Activated B cell treated with CpG ODN at 0.5 μM for 24 hours (primary cell): ENCODE measurements at regions of chr2 and their contacts with region 1.

Region 1: GRCh38 chr2:186503848-186504606 is 18.0 kb downstream of the ZC3H15 start:
- DNase-seq: no peak
- ATAC-seq: peak; percentile 42
- H3K4me3 Mint-ChIP-seq: no peak overlapping the region
- H3K27ac Mint-ChIP-seq: no peak overlapping the region
- H3K4me1 Mint-ChIP-seq: peaks cover 2% of the 10 kb centered on the region
- H3K27me3 Mint-ChIP-seq: no peaks in the 10 kb centered on the region
- CTCF ChIP-seq: no peak

Region 2: DNA sequence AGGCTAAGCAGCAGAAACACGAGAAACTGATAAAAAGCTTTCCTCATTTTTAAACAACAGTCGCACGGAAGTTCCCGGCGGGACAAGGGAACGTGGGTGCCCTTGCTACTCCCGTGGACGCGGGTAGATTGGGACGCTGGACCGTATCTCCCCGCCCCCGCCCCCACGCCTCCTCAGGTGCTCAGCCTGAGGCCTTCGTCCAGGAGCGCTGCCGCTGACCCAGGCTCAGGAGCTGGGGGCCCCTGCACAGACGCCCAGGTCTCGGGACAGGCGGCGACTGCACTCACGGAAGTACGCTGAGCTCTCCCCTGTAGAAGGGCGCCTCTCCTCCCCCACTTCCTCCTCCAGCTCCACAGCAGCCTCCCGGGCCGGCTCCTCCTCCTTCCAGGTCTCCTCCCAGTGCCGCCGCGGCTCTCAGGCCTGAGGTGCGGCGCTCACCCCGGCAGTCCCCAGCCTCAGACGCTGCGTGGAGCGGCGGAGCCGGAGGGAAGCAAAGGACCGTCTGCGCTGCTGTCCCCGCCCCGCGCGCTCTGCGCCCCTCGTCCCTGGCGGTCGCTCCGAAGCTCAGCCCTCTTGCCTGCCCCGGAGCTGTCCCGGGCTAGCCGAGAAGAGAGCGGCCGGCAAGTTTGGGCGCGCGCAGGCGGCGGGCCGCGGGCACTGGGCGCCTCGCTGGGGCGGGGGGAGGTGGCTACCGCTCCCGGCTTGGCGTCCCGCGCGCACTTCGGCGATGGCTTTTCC is 85.8 kb after region 1 on chr2 and contains the start of gene ITGAV:
- CTCF ChIA-PET with region 1: interaction called, 4 read pairs
- POLR2A ChIA-PET with region 1: no interaction called
- intact Hi-C with region 1: loop called (anchors 5 kb)
- DNase-seq: peak; percentile 53
- ATAC-seq: peak; percentile 93
- H3K4me3 Mint-ChIP-seq: peak within 1 kb of the TSS; percentile 81
- H3K27ac Mint-ChIP-seq: peak within 1 kb of the TSS; percentile 73
- H3K4me1 Mint-ChIP-seq: peaks cover 22% of the 10 kb centered on the region
- H3K27me3 Mint-ChIP-seq: no peaks in the 10 kb centered on the region
- CTCF ChIP-seq: no peak
- total RNA-seq, gene ITGAV: 2.6 and 4.1 TPM in 2 replicates

Region 3: DNA sequence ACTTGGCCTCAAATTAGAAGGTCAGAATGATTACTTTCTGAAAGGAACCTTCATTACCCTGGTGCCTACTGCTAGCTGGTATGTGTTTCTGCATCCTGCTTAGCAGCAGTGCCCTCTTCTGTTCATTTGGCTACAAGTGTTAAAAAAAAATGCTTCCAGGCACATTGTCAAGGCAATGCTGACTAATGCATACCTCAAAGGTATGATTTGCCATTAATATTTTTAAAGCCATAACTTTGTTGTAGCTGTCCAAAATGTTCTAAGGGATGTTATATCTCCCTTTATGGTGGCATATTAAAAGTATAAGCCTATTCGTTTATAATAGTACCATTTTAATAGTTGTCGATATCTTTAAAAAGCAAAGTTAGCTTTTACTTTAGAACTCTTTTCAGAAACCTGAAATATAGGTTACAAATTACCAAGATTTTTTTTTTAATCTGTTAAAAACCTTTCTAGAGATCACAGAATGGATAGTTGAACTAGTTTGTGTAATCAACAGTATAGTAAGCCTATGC is 137.8 kb after region 1 on chr2:
- CTCF ChIA-PET with region 1: interaction called, 56 read pairs
- POLR2A ChIA-PET with region 1: no interaction called
- intact Hi-C with region 1: loop called (anchors 1 kb)
- DNase-seq: no peak
- ATAC-seq: peak; percentile 56
- H3K4me3 Mint-ChIP-seq: no peak overlapping the region
- H3K27ac Mint-ChIP-seq: no peak overlapping the region
- H3K4me1 Mint-ChIP-seq: no peaks in the 10 kb centered on the region
- H3K27me3 Mint-ChIP-seq: no peaks in the 10 kb centered on the region
- CTCF ChIP-seq: no peak

Region 4: GRCh38 chr2:187453078-187453641 is 949.1 kb after region 1 on chr2:
- CTCF ChIA-PET with region 1: no interaction called
- POLR2A ChIA-PET with region 1: no interaction called
- intact Hi-C with region 1: loop called (anchors 5 kb)
- DNase-seq: no peak
- ATAC-seq: no peak
- H3K4me3 Mint-ChIP-seq: no peak overlapping the region
- H3K27ac Mint-ChIP-seq: no peak overlapping the region
- H3K4me1 Mint-ChIP-seq: no peaks in the 10 kb centered on the region
- H3K27me3 Mint-ChIP-seq: no peaks in the 10 kb centered on the region
- CTCF ChIP-seq: no peak